GM13976 (cell line): ENCODE measurements at regions of chr16 and their contacts with region 1.

Region 1: GRCh38 chr16:31458844-31459721 is at the start of gene ARMC5:
- DNase-seq: peak; percentile 92
- CTCF ChIP-seq: peak; percentile 64

Region 2: DNA sequence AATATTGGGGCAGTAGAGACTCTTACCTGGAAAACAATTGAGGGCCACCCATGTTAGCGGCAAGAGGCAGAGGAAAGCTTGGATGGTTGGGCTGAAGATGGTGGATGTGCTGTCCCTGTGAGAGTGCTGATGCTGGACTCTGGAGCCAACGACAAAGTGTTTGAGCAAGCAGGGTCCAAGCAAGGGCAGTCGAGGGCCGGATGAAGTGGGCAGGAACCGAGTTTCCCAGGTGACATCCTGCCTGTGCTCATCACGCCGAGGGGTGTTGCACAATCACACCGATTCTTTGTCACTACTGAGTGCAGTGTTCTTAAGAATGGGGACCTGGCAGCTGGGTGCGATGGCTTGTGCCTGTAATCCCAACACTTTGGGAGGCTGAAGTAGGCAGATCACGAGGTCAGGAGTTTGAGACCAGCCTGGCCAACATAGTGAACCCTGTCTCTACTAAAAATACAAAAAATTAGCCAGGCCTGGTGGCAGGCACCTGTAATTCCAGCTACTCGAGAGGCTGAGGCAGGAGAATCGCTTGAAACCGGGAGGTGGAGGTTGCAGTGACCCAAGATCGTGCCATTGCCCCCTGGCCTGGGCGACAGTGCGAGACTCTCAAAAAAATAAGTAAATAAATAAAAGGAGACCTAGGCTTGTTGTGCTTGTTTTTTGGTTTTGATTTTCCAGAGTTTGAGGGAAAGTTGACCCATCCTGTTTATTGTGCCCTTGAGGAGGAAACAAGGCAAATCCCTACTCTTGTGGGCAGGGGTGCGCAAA is 262.6 kb before region 1 on chr16:
- in situ Hi-C with region 1: no loop called
- DNase-seq: no peak
- CTCF ChIP-seq: no peak

Region 3: DNA sequence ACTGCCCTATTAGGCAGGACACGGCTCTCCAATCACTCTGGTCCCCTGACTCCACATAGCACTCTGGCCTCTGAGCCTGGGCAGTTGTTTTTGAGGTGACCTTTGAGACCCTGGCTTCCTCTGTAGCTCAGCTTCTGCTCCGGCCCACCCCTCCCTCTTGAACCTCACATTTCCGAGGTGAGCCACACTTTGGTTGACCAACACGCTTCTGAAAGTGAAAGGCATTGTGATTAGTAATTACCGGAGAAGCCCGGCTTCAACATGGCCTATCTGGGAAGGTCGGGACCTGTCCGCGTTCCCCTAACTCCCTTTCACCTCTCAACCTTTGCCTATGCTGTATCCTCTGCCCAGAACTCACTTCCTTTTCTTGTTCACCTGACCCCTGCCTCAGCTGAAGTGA is 114.4 kb before region 1 on chr16:
- in situ Hi-C with region 1: no loop called
- DNase-seq: peak; percentile 65
- CTCF ChIP-seq: no peak

Region 4: DNA sequence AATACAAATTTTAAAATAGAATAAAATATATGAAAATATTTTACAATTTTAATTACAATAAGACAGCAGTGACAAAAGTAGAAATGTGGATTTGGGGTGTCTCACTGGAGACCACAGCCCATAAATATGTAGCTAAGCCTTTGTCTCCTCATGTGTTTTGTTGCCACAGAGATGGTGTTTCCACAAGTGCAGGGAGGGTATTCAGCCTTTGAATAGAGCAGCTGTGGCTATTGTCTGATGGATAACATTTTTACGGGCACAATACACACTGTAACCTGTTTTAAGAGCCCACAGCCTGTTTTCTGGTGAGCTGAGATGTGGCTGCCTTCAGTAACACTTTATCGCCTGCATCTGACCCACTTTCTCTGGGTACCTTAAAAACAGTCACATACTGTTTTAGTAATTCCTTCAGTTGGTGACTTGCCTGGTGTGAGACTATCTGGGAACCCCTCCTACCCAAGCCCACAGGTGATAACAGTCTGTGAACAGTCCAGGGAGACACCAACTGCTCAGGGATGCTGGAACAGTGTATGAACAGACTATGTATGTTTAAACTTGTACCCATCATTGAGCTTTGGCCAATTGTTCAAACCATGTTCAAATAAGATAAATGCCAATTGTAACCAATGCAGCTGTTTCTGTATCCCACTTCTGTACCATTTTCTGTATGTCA is 60.8 kb after region 1 on chr16:
- in situ Hi-C with region 1: no loop called
- DNase-seq: no peak
- CTCF ChIP-seq: no peak

Region 5: DNA sequence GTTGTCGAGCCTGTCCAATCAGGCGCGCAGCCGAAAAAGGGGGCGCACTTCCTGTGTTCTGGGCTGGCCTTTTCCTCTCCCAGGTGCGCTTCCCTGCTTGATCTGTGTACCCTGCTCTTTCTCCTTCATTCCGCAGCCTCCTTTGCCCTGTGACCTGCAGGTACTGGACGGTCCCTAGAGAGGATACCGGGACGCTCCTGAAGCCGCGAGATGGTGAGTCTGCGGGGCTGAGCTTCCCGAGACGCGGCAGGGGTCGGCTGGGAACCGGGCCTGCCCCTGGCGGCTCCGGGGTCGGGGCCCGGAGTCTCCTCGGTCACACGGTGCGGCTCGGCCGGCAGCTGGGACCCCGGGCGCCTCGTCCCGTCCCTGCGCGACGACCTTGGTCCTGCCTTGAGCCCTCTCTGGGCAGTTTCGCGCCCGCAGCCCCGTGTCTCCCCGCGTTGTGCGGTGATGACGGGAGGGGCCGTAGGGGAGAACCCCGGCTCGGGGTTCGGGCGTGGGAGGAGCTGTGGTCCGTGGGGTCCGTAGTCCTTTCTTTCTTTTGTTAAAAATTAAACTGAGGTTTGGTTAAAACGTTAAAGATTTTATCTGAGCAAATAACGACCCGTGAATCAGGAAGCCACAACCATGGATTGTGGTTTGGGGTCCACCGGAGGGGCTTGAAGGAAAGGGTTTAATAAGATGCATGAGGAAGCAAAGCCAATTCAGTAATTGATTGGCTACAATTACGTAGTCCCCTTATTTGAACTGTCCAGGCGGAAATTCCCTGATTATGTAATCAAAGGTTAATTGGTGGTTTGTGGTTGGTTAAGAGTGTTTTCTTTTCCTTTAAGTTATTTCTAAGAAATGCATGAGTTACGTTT is 241.7 kb after region 1 on chr16:
- in situ Hi-C with region 1: no loop called
- DNase-seq: peak; percentile 53
- CTCF ChIP-seq: peak; percentile 17

Region 6: DNA sequence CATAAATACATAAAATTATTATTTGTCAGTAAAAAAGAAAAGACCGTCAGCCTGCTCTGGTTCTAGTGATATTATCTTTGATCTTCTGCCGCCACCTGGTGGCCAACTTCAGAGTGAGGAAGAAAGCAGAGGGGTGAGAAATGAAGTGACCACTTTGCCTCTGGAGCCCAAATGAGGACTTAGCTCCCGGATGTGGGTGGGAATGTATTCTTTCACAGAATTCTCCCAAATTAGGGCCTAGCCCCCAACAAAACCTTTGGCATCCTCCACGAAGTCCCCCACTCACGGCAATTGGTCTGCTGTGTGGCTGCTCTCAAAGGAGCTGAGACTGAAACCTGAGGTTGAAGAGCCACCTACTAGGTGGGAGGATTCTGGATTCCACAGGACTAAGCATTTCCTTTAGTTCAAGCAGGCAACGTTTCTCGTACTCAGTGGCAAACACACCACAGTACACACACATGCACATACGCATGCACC is 409.6 kb after region 1 on chr16:
- in situ Hi-C with region 1: loop called (anchors 10 kb)
- DNase-seq: peak; percentile 61
- CTCF ChIP-seq: peak; percentile 61